Right lobe of liver (tissue), 6 donors: ENCODE measurements at regions of chr18 and their contacts with region 1.

Region 1: GRCh38 chr18:4599312-4599711 is 144.2 kb upstream of the DLGAP1 start:
- DNase-seq: no peak
- ATAC-seq: no peak
- H3K4me3 ChIP-seq: no peak overlapping the region
- H3K27ac ChIP-seq: no peak overlapping the region
- H3K4me1 ChIP-seq: no peaks in the 10 kb centered on the region
- H3K27me3 ChIP-seq: no peaks in the 10 kb centered on the region
- CTCF ChIP-seq: no peak
- POLR2A ChIP-seq: no peak

Region 2: DNA sequence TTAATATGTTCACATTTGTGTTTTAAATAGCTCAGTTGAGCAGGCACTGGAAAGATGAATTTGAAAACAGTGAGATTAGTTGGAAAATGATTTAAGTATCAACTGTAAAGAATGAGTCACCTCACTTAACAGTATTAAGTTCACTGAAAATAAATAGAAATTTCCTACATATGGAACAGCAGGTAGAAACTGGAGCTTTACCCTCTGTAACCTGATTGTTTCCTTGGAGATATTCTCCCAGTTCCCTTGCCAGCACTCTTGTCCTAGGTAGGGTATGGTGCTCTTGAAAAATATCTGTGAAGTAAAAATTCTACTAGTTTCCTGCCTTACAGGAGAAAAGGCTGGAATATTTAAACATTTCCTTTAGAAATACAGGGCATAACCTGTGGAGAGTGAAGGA is 62.9 kb before region 1 on chr18:
- intact Hi-C with region 1: loop called in 1 of 2 experiments (anchors 10 kb)
- DNase-seq: no peak
- ATAC-seq: no peak
- H3K4me3 ChIP-seq: no peak overlapping the region
- H3K27ac ChIP-seq: no peak overlapping the region
- H3K4me1 ChIP-seq: no peaks in the 10 kb centered on the region
- H3K27me3 ChIP-seq: no peaks in the 10 kb centered on the region
- CTCF ChIP-seq: no peak
- POLR2A ChIP-seq: no peak

Region 3: DNA sequence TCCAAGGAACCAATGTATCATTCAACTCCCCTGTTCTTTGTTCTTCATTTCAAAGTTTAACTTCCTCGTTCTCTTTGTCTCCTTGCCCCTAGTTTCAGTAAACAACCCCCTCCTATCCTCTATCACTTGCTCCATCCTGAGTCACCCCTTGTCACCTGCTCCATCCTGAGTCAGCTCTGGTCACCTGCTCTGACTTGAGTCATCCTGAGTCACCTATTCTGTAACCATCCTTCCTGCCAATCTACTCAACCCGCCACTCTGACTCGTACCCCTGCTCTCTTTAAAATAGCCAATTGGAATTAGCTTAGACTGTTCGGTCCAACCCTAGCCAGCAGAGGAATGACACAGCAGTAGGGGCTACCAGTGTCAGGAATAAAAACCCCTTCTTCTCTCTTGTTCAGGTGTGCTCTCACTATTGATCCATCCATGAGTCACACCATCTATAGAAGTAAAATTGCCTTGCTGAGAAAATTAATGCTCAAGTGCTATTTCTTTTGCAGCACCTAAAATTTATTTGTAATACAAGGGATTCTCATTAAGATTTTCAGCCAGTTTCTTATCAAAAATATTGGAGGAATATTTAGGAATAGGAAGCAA is 271.0 kb after region 1 on chr18:
- intact Hi-C with region 1: no loop called
- DNase-seq: no peak
- ATAC-seq: no peak
- H3K4me3 ChIP-seq: no peak overlapping the region
- H3K27ac ChIP-seq: no peak overlapping the region
- H3K4me1 ChIP-seq: no peaks in the 10 kb centered on the region
- H3K27me3 ChIP-seq: no peaks in the 10 kb centered on the region
- CTCF ChIP-seq: no peak
- POLR2A ChIP-seq: no peak